ENCODE measurements at regions of chr18 and their contacts with region 1.

Region 1: DNA sequence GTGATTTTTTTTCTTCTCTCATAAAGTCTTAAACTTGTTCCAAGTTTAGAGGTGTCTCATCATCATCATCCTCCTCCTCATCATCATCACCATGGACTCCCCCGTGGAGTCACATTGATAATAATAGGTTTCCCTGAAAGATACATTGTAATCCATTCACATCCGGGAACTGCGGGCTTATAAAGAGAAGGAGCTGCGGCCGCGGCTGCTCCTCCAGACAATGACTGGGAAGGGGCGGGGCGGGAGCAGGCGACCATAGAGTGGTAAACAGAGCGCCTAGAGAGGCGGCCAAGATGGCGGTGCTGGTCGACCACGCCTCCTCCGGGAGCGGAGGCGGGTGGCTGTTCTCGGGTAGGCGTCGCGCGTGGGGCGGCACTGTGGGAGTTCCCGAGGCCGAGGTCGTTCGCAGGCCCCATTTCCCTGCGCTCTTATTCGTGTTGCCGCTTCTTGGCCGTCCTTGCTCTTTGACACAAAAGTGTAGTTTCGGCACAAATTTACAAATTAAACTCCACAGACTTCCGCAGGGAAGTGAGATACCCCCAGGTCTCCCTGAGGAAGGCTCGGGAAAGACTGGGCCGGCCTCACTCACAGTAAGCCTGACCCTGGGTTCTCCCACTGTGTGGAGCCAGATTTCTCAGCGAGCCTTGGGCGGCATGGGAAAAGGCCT is 1.8 kb upstream of the TCF4 start:
- DNase-seq: peak; percentile 97

Region 2: GRCh38 chr18:55234366-55235093 is 355.2 kb before region 1 on chr18:
- intact Hi-C with region 1: loop called (anchors 5 kb)
- DNase-seq: peak; percentile 76

Region 3: DNA sequence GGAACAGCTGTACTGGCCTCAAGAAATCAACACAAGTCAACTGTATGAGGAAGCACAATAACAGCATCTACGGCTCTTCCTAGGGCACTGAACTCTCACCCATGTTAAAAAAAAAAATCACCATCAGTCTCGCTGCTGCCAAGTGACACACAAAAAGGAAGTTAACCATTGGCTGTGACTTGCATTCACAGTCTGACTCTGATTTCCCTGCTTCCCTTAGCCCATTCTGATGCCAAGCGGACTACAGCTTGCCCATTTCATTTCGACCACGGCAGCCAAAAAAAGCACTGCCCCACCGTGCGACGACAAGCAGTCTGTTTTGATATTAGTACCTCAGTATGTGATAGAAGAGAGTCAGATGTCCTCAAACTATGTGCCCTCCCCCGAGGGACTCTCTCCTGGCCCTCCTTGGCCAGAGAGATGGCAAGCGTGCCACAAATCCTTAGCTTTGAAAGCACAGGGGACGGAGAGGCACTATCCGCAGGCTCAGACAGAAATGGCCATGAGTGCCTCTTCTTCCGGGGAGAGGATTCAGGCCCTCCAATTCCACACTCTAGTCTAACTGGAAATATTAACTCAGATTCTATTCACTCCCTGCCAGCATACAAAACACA is 251.7 kb before region 1 on chr18:
- intact Hi-C with region 1: loop called (anchors 5 kb)
- DNase-seq: no peak

Region 4: DNA sequence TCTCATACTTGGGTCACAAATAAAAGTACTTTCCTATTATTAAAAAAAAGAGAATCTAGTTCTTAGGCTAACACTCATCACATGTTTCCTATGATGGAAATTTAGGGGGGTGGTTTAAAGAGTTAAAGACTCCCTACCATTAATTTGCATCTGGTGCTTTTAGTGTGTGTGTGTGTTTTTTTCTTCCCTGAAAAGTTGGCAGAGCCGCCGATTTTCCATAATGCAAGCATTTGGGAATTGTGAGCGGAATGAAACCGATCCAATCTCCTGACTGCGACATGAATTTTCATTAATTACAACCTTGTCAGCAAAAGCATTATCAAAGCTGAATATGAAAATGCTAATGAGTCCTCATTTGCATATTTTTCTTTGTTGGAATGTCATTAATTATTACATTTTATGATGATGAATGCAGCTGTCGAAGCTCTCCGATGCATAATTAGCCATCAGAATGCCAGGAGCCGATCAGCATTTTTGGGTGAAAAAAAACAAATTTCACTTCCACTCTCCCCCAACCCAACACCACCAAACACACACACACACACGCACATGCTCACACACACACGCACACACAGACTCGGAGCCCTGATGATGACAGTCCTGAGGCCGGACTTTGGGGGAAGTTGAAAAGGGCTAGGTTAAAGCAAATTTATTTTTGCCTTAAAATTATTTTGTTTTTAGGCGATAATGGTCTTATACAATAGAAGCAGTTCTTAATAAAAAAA is 167.1 kb before region 1 on chr18:
- intact Hi-C with region 1: loop called (anchors 2 kb)
- DNase-seq: no peak

Region 5: GRCh38 chr18:55503167-55503820 is 86.5 kb before region 1 on chr18:
- intact Hi-C with region 1: no loop called
- DNase-seq: no peak

Region 6: DNA sequence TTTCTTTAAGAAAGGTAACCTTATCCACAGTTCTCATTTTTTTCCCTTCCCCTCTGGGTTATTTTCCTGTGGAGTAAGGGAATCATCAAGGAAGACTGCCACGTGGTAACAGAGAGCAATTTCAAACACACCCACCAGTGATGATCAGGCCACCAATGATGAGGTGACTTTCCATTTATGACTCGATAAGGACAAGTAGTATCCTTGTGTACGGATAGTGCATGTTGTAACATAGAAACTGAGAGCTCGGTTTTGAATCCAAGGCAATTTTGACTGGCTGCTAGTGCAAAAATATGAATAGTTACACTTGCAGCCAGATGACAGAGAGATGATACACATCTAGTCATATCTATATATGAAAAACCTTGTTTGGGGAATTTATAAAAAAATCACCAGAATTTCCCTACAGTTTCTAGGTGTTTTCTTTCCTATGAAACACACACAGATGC is 141.9 kb after region 1 on chr18:
- intact Hi-C with region 1: loop called (anchors 5 kb)
- DNase-seq: no peak

Region 7: DNA sequence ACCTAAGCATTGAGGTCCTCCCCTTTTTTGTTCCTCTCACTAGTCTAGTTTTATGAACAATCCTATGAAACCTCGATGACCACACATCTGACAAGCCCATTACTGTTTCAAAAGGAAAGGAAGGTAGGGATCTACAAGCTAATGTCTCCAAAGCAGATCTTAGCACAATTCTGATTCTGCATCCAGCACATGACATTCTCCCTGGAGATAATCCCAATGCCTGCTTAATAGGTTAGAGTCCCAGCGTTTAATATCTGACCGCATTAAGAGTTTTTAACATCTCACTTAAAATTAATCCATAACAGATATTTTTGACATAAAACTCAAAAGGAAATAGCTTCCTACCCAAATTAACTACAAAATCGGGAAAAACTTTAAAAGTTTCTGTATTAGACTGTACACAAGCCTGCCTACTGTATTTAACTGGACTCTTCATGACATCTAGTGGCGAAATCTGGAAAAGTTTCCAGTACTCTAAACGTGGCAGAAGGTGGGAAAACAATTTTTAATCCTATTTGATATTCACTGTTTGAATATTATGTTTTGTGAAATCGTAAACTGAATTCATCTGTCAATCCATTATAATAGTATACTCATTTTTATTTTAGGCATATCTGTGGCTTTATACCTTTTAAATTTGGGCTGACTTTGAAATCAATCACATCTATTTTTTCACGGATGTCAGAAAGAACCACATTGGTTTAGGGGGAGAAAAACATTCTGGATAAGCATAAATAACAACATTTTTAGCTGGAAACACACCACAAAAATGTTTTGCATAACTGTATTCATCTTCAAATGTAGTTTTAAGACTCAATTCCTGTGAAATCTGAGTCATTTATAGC is 986.3 kb after region 1 on chr18:
- intact Hi-C with region 1: loop called (anchors 10 kb)
- DNase-seq: no peak